ENCODE measurements at regions of chr14 and their contacts with region 1.

Region 1: GRCh38 chr14:67420102-67420830 is 8.3 kb upstream of the PLEK2 start:
- DNase-seq: no peak
- ATAC-seq: peak; percentile 30
- H3K4me3 Mint-ChIP-seq: no peak overlapping the region
- H3K27ac Mint-ChIP-seq: no peak overlapping the region
- H3K4me1 Mint-ChIP-seq: peaks cover 13% of the 10 kb centered on the region
- H3K27me3 Mint-ChIP-seq: peaks cover 3% of the 10 kb centered on the region
- CTCF ChIP-seq: no peak

Region 2: DNA sequence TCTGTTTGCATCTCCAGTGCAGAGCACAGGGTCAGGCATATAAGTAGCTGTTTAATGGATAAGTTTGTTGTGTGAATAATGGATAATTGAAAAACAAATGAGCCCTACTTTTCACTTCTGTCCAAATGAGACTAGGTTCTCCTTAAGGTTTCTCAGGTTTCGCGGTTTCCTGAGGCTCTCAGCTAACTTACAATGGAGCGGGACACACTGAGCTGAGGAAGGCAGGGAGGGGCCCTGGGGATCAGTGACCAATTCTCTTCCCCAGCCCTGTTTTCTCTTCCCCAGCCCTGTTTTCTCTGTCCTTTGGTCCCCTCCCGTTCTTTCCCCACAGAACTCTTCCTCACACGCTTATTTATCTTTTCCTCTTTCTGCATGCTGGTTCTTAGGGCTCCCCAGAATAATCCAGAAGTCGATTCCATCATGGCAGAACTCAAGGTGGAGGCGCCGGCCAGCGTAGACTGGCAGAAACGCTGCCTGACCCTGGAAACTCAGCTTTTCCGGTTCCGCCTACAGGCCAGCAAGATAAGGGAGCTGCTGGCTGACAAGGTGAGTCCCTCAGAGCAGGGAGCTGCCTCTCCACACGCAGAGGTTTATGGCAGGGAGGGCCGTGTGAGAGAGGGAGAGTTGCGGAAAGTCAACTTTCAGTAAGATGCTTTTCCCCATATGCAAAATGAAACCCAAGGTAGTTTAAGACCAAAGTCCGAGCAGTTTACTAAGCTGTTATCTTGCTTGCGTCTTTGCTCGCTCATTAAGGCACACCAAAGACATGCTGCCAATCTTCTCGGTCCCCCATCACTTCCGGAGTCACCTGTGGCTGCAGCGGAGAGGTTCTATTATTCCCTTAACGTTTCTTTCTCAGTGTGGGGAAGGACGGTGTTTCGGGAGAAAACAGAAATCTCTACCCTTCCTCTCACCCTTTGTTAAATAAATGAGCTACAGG is 121.5 kb after region 1 on chr14:
- CTCF ChIA-PET with region 1: no interaction called
- POLR2A ChIA-PET with region 1: no interaction called
- intact Hi-C with region 1: no loop called
- DNase-seq: no peak
- ATAC-seq: no peak
- H3K4me3 Mint-ChIP-seq: peak overlapping the region; percentile 72
- H3K27ac Mint-ChIP-seq: no peak overlapping the region
- H3K4me1 Mint-ChIP-seq: peaks cover 9% of the 10 kb centered on the region
- H3K27me3 Mint-ChIP-seq: peaks cover 37% of the 10 kb centered on the region
- CTCF ChIP-seq: no peak

Region 3: DNA sequence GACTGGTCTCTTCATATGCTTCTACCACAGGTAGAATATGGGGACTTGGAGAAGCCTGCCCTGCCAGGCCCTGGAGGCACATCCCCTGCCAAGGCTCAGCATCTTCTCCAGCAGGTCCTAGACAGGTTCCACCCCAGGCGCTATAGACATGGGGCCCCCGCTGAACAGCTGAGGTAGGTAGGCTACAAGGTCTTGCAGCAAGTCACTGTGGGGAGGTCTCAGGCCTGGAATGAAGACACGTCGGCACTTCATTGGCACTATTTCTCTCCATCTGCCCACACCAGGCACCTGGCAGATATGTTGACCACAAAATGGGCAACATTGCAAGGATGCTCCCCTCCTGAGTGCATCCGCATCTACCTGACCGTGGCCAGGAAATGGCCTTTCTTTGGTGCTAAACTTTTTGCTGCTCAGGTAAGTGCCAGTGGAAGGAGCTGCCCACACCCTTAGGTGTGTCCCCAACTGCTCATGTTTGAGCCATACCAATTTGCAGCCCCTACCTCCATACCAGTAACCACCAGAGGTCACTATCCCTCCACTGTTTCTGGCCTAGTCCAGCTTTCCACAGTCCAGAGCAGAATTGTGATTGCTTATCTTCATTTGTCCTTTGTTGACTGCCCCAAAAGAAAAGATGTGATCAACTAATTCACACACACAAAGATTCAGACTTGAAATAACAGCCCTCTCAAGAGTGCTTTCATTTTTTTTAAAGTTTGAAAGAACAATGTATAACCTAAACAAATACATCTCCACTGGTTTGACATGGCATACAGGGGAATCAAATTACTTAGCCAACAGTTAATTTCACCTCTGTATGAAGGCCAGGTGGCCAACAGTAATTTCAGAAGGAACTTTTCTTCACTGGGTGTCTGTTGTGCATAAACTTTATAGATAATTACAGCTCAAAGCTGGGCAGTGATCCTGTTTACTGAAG is 163.7 kb after region 1 on chr14:
- CTCF ChIA-PET with region 1: no interaction called
- POLR2A ChIA-PET with region 1: no interaction called
- intact Hi-C with region 1: no loop called
- DNase-seq: no peak
- ATAC-seq: peak; percentile 80
- H3K4me3 Mint-ChIP-seq: no peak overlapping the region
- H3K27ac Mint-ChIP-seq: no peak overlapping the region
- H3K4me1 Mint-ChIP-seq: peaks cover 5% of the 10 kb centered on the region
- H3K27me3 Mint-ChIP-seq: no peaks in the 10 kb centered on the region
- CTCF ChIP-seq: peak; percentile 46

Region 4: DNA sequence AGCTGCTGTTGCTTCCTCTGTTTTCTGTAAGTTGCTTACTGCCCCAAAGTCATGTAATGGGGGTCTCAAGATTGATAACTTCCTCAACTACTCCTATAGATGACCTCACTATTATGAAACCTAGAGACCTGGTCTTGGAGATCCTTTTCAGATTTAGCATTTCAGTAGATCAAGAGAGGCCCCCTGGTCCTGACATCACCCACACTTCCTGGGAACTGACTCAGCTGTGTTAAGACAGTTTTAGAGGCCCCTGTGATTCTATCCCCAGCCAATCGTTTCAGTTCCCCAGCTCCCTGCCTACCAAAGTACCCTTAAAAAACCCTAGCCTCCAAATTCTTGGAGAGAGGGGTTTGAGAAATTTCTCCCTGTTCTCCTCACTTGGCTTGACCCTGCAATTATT is 190.2 kb after region 1 on chr14:
- CTCF ChIA-PET with region 1: no interaction called
- POLR2A ChIA-PET with region 1: no interaction called
- intact Hi-C with region 1: no loop called
- DNase-seq: no peak
- ATAC-seq: no peak
- H3K4me3 Mint-ChIP-seq: no peak overlapping the region
- H3K27ac Mint-ChIP-seq: no peak overlapping the region
- H3K4me1 Mint-ChIP-seq: no peaks in the 10 kb centered on the region
- H3K27me3 Mint-ChIP-seq: no peaks in the 10 kb centered on the region
- CTCF ChIP-seq: no peak

Region 5: GRCh38 chr14:67806246-67806645 is 386.0 kb after region 1 on chr14:
- CTCF ChIA-PET with region 1: no interaction called
- POLR2A ChIA-PET with region 1: no interaction called
- intact Hi-C with region 1: no loop called
- DNase-seq: no peak
- ATAC-seq: no peak
- H3K4me3 Mint-ChIP-seq: no peak overlapping the region
- H3K27ac Mint-ChIP-seq: no peak overlapping the region
- H3K4me1 Mint-ChIP-seq: peaks cover 3% of the 10 kb centered on the region
- H3K27me3 Mint-ChIP-seq: no peaks in the 10 kb centered on the region
- CTCF ChIP-seq: no peak

Region 6: DNA sequence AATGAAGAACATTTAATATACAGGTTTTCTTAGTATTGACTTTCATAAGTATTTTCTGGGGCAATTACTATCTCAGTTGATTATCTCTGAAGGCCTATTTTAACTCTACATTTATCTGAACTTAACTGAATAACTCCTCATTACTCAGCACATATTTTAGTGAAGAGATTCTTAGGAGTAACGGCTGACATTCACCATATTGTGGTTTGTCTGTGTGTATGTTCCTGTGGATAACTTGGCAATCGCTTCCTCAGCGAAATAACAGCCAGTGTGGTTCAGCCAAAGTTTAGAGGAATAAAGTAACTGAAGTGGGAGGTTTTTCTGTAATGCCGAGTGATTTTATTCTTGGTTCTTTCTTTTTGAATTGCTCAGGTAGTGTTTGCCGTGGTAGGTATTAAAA is 567.3 kb after region 1 on chr14:
- CTCF ChIA-PET with region 1: no interaction called
- POLR2A ChIA-PET with region 1: interaction called, 11 read pairs
- intact Hi-C with region 1: no loop called
- DNase-seq: no peak
- ATAC-seq: no peak
- H3K4me3 Mint-ChIP-seq: no peak overlapping the region
- H3K27ac Mint-ChIP-seq: no peak overlapping the region
- H3K4me1 Mint-ChIP-seq: no peaks in the 10 kb centered on the region
- H3K27me3 Mint-ChIP-seq: no peaks in the 10 kb centered on the region
- CTCF ChIP-seq: no peak